ENCODE measurements at regions of chr3 and their contacts with region 1.

Region 1: GRCh38 chr3:39126532-39127071 is 19.1 kb downstream of the TTC21A start:
- DNase-seq: no peak
- H3K4me3 ChIP-seq: no peak overlapping the region
- H3K27me3 ChIP-seq: no peaks in the 10 kb centered on the region
- CTCF ChIP-seq: peak; percentile 63

Region 2: DNA sequence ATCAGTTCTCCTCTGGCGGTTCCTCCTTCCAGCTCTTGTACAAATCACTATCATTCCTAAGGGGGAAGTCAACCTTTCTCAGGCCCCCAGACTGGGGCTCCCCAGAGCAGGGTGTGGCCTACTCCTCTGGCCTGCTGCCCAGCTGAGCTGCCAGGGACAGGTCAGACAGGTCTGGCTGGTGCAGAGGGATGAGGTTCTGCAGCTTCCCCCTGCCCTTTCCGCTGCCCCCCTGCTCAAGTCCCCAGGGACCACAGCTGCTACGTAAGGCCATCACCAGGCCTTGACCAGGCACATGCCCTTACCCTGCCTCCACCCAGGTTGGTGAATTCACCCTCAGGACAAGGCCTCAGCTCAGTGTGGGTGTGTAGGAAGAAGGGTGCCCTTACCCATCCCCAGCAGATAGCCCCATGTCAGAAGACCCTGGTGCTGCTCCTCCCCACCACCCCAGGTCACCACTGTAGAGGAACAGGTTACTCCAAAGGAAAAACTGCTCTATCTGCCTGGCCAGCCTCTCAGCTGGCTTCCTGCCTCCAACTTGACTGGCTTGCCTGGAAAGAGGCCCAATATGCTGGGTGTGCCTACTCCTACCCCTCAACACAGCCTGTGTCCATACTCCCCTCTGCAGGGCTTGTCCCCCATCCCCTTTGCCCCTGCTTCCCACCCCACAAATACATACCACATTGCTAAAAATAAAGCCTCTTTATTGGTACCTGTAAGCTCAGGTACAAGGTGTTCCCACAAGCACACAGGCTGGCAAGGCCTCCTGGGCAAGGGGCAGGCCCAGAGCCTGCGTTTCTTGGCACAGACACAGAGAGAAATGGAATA is 14.8 kb after region 1 on chr3:
- CTCF ChIA-PET with region 1: interaction called, 66 read pairs
- POLR2A ChIA-PET with region 1: no interaction called
- DNase-seq: no peak
- H3K4me3 ChIP-seq: no peak overlapping the region
- H3K27me3 ChIP-seq: no peaks in the 10 kb centered on the region
- CTCF ChIP-seq: no peak

Region 3: GRCh38 chr3:39166134-39166731 is 39.6 kb after region 1 on chr3:
- CTCF ChIA-PET with region 1: interaction called, 19 read pairs
- POLR2A ChIA-PET with region 1: no interaction called
- DNase-seq: peak; percentile 87
- H3K4me3 ChIP-seq: no peak overlapping the region
- H3K27me3 ChIP-seq: no peaks in the 10 kb centered on the region
- CTCF ChIP-seq: no peak

Region 4: DNA sequence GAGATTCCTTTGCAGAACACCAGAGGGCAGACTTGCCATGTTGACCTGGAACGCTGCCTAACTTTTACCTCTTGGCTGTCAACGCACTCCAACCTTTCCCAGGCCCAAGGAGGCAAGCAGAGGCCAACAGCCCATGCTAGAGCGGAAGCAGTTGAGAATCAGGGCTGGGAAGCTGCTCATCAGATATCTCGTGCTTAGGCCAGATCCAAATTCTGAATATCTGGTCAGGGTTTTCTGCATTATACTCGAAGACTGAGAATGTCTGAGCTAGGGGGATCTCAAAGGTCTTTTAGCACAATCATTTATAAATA is 63.3 kb after region 1 on chr3:
- CTCF ChIA-PET with region 1: interaction called, 110 read pairs
- POLR2A ChIA-PET with region 1: no interaction called
- DNase-seq: no peak
- H3K4me3 ChIP-seq: no peak overlapping the region
- H3K27me3 ChIP-seq: no peaks in the 10 kb centered on the region
- CTCF ChIP-seq: peak; percentile 77

Region 5: GRCh38 chr3:39990532-39990931 is 863.9 kb after region 1 on chr3:
- CTCF ChIA-PET with region 1: no interaction called
- POLR2A ChIA-PET with region 1: no interaction called
- DNase-seq: no peak
- H3K4me3 ChIP-seq: no peak overlapping the region
- H3K27me3 ChIP-seq: no peaks in the 10 kb centered on the region; the same call in 1 of the 2 replicates
- CTCF ChIP-seq: peak; percentile 50

Measured in BJ (cell line).